Heart right ventricle (tissue), 16 donors: ENCODE measurements at regions of chr15 and their contacts with region 1.

Region 1: GRCh38 chr15:51971375-51972133 is at the start of gene LEO1:
- DNase-seq: peak; percentile 78 to 93
- ATAC-seq: peak; percentile 94 to 98 (median 98)
- H3K4me3 ChIP-seq: peak within 1 kb of the TSS; percentile 43 to 91 (median 80)
- H3K27ac ChIP-seq: peak within 1 kb of the TSS; percentile 49 to 96 (median 92)
- H3K4me1 ChIP-seq: peaks cover 6 to 22% (median 16%) of the 10 kb centered on the region in 9 donors
- H3K27me3 ChIP-seq: no peaks in the 10 kb centered on the region
- CTCF ChIP-seq: peak in 5 of 9 donors; percentile 26 to 69 (median 63)
- total RNA-seq, gene LEO1: 6.6 to 9.1 (median 8.2) TPM

Region 2: GRCh38 chr15:51731549-51732267 is 239.8 kb before region 1 on chr15:
- intact Hi-C with region 1: loop called in 1 of 10 experiments (anchors 5 kb)
- DNase-seq: peak in 1 of 2 donors; percentile 57
- ATAC-seq: peak; percentile 38 to 88 (median 80)
- H3K4me3 ChIP-seq: peak overlapping the region in 7 of 10 donors; percentile 8 to 47 (median 31)
- H3K27ac ChIP-seq: peak overlapping the region; percentile 22 to 85 (median 72)
- H3K4me1 ChIP-seq: peaks cover 0 to 69% (median 45%) of the 10 kb centered on the region in 9 donors
- H3K27me3 ChIP-seq: no peaks in the 10 kb centered on the region
- CTCF ChIP-seq: no peak

Region 3: DNA sequence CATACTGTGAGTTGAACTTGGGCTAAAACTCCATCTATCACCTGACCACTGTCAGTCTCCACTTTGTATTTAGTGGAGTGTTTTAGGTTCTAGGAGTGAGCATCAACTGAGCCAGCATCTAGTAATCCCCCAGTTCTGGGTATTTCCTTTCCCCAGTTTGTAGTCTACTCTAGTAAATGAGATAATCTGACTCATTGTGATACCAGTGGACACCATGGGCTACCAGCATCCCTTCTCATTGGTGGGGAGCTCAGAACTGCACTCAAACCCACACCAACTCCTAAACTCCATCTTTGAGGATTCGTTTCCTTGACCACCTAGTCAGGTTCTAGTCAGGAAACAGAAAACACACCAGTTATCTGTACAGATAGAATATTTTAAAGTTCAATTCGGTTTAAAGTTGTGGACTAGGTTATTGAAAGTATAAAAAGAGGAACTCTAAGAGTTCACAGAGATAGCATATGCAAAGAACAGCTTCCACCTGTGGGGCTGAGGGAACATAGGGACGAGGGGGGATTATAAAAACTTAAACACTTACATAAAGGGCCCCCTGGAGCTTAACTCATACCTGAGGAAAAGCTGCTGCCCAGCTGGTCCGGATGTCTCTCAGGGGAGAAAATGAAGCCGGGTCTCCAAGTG is 36.0 kb before region 1 on chr15:
- intact Hi-C with region 1: no loop called
- DNase-seq: no peak
- ATAC-seq: no peak
- H3K4me3 ChIP-seq: no peak overlapping the region
- H3K27ac ChIP-seq: no peak overlapping the region
- H3K4me1 ChIP-seq: peaks cover 0 to 7% (median 0%) of the 10 kb centered on the region in 9 donors
- H3K27me3 ChIP-seq: no peaks in the 10 kb centered on the region
- CTCF ChIP-seq: no peak

Region 4: GRCh38 chr15:52010633-52011595 is 39.4 kb after region 1 on chr15:
- intact Hi-C with region 1: loop called in 2 of 10 experiments (anchors 5 kb)
- DNase-seq: no peak
- ATAC-seq: no peak
- H3K4me3 ChIP-seq: no peak overlapping the region
- H3K27ac ChIP-seq: peak overlapping the region in 6 of 10 donors; percentile 5 to 66 (median 46)
- H3K4me1 ChIP-seq: peaks cover 6 to 73% (median 50%) of the 10 kb centered on the region in 9 donors
- H3K27me3 ChIP-seq: no peaks in the 10 kb centered on the region
- CTCF ChIP-seq: no peak

Region 5: DNA sequence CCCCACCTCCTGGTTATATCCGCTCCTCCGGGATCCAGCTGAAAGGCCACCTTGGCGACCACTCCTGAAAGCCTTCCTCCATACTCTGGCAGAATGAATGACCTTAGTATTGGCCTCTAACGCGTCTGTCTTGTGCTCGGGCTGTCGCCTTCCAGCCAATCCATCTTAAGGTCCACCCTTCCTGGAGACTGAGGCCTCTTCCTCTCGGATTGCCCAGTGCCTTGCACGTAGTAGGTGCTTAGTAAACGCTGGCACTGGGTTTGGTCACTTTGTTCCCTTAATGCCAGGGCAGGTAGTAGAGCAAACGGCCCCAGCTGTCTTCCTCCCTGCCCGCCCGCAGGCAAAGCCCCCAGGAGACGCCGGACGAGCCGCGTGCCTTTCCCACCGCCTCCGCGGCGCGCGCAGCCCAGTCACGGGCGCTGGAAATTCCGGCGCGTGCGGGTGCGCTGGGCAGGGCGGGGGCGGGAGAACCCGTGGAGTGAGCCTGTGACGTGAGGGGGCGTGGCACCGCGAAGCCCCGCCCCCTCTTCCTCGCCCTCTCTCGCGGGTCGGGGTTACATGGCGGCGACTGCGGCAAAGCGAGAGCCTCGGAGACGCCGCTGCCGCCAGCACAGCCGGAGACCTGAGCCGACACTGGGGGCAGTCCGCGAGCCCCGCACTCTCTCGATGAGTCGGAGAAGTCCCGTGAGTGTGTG is 47.3 kb after region 1 on chr15 and contains the start of gene MAPK6:
- intact Hi-C with region 1: loop called in 3 of 10 experiments (anchors 5 kb)
- DNase-seq: peak; percentile 94 to 96
- ATAC-seq: peak; percentile 92 to 98 (median 95)
- H3K4me3 ChIP-seq: peak within 1 kb of the TSS; percentile 56 to 83 (median 76)
- H3K27ac ChIP-seq: peak within 1 kb of the TSS; percentile 91 to 97 (median 94)
- H3K4me1 ChIP-seq: peaks cover 0 to 54% (median 42%) of the 10 kb centered on the region in 9 donors
- H3K27me3 ChIP-seq: no peaks in the 10 kb centered on the region
- CTCF ChIP-seq: no peak
- total RNA-seq, gene MAPK6: 13.5 to 21.8 (median 18.1) TPM

Region 6: GRCh38 chr15:52078876-52079700 is 107.5 kb after region 1 on chr15:
- intact Hi-C with region 1: loop called in 4 of 10 experiments (anchors 1 to 10 kb)
- DNase-seq: peak; percentile 83
- ATAC-seq: peak in 7 of 8 donors; percentile 71 to 90 (median 85)
- H3K4me3 ChIP-seq: no peak overlapping the region
- H3K27ac ChIP-seq: no peak overlapping the region
- H3K4me1 ChIP-seq: peaks cover 0 to 21% (median 0%) of the 10 kb centered on the region in 9 donors
- H3K27me3 ChIP-seq: no peaks in the 10 kb centered on the region
- CTCF ChIP-seq: peak; percentile 70 to 94 (median 90)

Region 7: DNA sequence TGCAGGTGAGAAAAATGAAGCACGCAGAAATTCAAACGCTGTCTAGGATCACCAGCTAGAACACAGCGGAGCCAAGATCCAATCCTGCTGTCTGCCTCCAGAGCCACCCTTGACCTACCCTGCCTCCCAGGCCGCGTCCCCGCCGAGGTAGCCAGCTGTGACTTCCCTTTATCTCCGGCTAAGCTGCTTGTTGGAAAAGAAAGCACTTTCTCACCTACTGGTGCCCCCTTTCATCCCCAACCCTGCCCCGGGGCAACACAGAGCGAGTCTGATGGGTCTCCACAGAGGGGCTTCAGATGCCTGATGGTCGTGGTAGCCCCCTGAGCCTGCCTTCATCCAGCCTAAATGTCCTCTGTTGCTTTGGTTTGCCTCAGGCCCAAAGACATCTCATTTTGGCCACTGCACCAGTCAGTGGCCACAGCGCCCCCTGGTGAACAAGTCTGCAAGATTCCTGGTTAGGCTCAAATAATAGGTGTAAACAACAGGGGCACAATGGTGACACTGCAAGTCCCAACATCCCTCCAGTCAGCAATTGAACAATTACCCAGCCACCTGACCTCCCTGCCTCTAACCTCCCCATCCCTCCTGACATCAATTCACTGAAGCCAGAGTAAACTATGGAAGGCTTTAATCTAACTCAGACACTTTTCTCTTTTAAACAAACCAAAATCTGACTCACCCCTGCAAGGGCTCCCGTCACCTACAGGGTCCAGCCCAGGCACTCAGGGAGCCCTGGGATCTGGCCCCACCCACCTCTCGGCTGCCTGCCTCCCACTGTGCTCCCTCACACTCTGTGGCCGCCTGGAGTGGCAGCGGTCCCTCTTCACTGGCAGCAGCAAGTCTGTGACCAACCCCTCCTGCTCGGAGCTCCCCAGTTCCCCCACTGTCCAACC is 168.3 kb after region 1 on chr15:
- intact Hi-C with region 1: loop called in 3 of 10 experiments (anchors 10 kb)
- DNase-seq: peak; percentile 44 to 64
- ATAC-seq: peak in 7 of 8 donors; percentile 22 to 71 (median 39)
- H3K4me3 ChIP-seq: no peak overlapping the region
- H3K27ac ChIP-seq: no peak overlapping the region
- H3K4me1 ChIP-seq: peaks cover 0 to 34% (median 9%) of the 10 kb centered on the region in 9 donors
- H3K27me3 ChIP-seq: no peaks in the 10 kb centered on the region
- CTCF ChIP-seq: peak; percentile 48 to 80 (median 75)